Activated naive CD8-positive, alpha-beta T cell treated with anti-CD3 and anti-CD28 coated beads, Interleukin-2, amount 10 ng/mL, durations not matched to agents 7 days and 5 days (primary cell): ENCODE measurements at regions of chr15 and their contacts with region 1.

Region 1: DNA sequence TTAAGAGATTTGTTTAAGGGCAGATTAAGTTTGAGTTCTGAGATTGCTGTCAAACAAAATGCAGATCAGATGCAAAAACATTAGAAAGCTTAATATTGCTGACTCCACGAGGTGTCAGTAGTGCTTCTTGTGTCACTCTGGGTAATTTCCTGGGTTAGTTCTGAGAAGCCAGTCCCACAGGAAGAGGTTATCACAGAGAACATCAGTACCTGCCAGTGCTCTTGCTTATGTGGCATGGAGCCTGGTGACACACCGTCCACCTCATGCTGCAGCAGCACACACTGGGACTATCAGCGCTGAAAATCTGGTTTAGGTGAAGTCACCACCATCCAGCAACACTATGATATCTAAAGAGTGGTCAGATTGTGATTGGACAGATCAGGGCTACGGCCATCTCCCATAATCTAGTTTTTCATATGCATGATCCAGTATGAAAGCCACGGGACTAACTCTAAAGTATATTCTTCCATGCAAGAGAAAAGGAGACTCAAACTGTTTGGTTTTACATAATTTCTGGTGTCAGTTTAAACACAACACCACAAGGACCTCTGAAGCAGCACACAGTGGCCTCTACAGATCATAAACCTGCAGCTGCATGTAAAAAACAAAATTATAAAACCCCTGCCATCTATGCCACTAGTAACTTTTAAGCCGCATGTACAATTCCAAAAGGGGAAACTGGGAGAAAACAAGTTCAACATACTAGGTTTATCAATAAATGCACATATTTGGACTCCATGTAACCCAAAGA is 36.1 kb upstream of the MYO5C start:
- DNase-seq: peak; percentile 56
- ATAC-seq: peak; percentile 100
- H3K4me3 Mint-ChIP-seq: peak overlapping the region; percentile 74
- H3K27ac Mint-ChIP-seq: peak overlapping the region; percentile 87
- H3K4me1 Mint-ChIP-seq: peaks cover 22% of the 10 kb centered on the region
- H3K27me3 Mint-ChIP-seq: no peaks in the 10 kb centered on the region

Region 2: DNA sequence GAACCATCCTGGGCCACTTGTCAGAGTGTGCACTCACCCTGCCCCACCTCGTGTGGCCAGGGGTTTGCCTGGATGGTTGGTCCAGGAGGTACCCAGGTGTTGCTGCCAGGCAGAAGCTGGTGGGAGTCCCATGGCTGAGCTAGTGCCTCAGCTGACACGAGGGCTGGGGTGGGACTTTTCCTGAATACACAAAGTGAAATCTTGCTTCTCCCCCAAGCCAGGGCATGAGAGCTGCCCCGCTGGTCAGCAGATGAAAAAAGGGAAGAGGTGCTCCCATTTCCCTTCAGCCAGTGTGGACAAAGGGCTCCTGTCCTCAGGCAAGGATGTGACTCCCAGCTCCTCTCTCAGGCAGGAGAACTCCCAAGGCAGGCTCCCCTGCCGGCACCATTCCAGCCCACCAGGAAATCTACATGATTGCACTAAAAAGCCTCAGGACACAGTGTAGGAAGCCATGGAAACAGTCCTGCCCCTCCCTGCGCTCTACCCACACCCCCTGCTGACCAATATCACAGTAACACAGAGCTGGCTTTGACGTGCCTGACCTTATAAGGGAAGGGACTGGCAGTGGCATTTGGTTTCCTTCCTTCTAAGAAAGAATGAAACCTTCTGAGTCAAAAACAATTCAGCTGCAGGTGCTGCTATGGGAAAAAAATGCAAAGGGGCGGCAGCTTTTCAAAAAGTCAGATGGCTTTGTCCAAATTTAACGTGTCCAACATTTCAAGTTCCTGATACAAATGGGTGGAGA is 70.0 kb before region 1 on chr15:
- POLR2A ChIA-PET with region 1: interaction called, 11 read pairs
- DNase-seq: peak; percentile 59
- ATAC-seq: peak; percentile 99
- H3K4me3 Mint-ChIP-seq: peak overlapping the region; percentile 59
- H3K27ac Mint-ChIP-seq: peak overlapping the region; percentile 92
- H3K4me1 Mint-ChIP-seq: peaks cover 44% of the 10 kb centered on the region
- H3K27me3 Mint-ChIP-seq: no peaks in the 10 kb centered on the region

Region 3: DNA sequence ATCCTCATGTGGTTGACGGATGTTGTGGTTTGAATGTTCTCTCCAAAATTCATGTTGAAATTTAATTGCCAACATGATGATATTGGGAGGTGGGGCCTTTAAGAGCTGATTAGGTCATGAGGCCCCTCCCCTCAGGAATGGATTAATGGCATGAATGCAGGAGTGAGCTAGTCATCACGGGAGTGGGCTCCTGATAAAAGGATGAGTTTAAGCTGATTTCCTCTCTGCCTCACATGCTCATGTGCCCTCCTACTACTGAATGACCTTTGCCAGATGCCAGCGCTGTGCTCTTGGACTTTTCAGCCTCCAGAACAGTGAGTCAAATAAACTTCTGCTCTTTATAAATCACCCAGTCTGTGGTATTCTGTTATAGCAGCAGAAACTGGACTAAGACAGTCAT is 85.9 kb after region 1 on chr15:
- POLR2A ChIA-PET with region 1: no interaction called
- DNase-seq: no peak
- ATAC-seq: no peak
- H3K4me3 Mint-ChIP-seq: no peak overlapping the region
- H3K27ac Mint-ChIP-seq: no peak overlapping the region
- H3K4me1 Mint-ChIP-seq: peaks cover 12% of the 10 kb centered on the region
- H3K27me3 Mint-ChIP-seq: no peaks in the 10 kb centered on the region

Region 4: GRCh38 chr15:52427804-52428203 is 96.1 kb after region 1 on chr15:
- POLR2A ChIA-PET with region 1: no interaction called
- DNase-seq: no peak
- ATAC-seq: no peak
- H3K4me3 Mint-ChIP-seq: no peak overlapping the region
- H3K27ac Mint-ChIP-seq: no peak overlapping the region
- H3K4me1 Mint-ChIP-seq: peaks cover 4% of the 10 kb centered on the region
- H3K27me3 Mint-ChIP-seq: no peaks in the 10 kb centered on the region